Posterior cingulate gyrus (tissue), 11 donors: ENCODE measurements at regions of chr12 and their contacts with region 1.

Region 1: DNA sequence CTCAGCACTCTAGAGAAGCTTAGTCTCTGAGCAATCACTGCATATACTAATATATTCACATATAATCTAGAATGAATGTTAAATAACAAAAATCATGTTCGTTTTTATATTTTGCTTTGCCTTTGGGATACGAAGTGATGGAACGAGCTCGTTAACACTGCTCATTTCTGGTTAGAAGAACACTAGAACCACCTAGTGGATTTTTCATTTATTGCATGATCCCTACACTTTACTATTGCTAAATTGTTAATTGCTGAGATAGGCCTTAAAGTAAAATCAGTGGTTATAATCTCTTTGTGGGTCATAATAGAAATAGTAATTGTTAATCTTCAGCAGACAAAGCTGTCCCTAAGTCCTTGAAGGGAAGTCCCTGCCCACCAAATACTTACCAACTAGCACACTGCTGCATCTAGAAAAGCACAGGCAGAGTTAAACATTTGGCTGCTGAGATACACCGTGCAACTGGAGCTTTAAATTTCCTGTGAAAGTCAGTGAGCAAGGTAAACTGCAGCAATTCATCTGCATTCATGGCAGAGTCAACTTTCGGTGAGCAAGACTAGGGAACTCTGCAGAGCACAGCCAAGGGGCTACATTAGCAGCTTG is 353.7 kb downstream of the APAF1 start:
- DNase-seq: no peak

Region 2: DNA sequence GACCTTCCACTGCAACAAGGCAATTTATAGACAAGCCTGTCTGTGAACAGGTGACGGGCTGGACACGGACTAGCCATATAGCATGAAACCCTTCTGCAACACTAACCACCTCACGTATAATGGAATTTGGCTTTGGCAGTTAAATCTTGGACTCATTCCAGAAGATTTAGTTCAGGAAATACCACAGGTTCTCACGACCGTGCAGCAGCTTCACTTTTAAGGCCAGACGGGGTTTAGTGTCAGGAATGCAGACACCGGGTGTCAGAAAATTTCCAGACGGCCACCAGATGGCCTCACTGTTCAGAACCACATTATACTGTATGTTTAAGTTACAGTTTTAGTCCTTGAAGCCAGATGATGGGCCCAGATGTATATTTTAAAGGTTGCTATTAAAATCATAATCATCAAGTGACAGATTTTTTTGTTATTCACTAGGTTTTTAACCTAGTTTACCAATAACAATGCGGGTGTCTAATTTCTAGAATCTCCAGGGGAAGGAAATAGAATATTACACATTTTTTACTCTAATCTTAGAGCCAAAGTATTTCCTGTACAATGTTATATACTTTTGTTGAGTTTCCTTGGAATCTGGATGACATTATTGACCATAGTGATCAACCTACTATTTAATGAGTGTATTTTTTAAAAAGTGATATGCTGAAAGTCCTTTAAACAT is 573.9 kb before region 1 on chr12:
- intact Hi-C with region 1: loop called (anchors 5 kb)
- DNase-seq: peak in 8 of 10 donors; percentile 62 to 93 (median 68)

Region 3: DNA sequence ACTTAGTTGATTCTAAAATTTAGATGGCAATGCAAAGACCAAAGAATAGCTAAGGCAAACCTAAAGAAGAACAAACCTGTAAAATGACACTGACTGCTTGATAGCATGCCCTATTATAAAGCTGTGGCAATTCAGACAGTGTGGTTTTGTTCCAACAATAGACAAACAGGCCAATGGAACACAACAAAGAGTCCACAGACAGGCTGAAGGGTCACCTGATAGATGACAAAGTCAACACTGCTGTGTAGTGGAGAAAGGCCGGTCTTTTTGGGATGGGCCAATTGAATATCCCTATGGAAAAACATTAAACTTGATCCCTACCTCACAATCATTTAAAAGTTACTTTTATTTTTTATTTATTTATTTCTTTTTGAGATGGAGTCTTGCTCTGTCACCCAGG is 439.1 kb before region 1 on chr12:
- intact Hi-C with region 1: loop called (anchors 10 kb)
- DNase-seq: peak in 3 of 10 donors; percentile 7 to 41 (median 35)

Region 4: DNA sequence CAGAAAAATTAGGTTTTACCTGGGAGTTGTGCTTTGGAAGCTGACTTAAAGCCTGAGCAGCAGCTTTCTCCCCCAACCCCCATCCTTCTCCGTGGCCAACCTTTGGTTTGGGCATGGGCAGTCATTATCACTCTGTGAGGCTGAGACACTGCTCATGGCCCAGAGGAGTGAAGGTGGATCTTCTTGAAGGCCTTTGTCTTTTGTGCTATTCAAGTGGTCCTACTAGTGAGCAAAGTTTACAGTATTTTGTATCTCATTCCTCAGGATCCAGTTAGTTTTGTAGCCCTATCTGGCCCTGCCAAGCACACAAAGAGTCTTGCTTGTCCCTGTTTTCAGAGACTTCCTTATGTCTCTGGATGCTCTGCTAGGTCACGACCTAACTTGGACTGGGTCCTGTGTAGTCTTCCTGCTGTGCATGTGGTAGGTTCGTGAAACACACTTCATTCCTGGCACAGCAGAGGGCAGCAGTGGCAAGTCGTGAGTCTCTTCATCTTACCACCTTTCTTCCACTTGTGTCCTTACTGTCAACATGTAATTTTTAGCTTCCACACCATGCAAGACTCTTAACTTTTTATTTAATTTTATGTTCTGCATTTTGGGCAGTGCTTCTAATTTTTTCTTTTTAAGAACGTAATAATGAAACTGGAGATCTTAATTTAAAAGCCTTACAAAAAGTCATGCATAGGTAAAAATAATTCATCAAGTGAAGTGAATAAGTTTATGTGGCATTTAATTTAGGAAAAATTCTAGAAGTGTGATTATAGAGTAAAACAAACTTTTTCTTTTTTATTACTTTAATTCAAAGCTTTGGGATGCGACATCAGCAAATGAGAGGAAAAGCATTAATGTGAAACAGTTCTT is 300.0 kb before region 1 on chr12:
- intact Hi-C with region 1: loop called (anchors 2 kb)
- DNase-seq: peak; percentile 46 to 97 (median 75)

Region 5: DNA sequence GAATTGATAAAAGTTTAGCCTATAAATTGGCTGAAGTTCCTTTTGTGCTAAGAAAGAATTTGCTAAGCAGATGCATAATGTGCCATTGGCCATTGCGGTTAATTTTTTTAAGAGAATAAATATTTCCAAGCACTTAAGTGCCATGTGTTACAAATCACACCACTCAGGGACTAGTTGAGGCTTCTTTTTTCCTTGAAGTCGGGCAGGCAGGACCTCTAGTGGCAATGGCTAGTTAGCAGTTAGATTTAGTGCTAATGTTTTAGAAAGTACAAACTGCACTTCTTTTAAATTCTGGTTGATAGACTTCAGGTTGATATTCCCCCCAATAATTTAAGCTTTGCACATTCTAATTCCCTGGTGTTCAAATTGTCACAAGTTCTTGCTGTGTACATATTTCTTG is 59.4 kb before region 1 on chr12:
- intact Hi-C with region 1: no loop called
- DNase-seq: peak in 6 of 10 donors; percentile 12 to 80 (median 34)